Activated CD8-positive, alpha-beta memory T cell treated with anti-CD3 and anti-CD28 coated beads, Interleukin-2, amount 10 ng/mL, durations not matched to agents 7 days and 5 days (primary cell): ENCODE measurements at regions of chr10 and their contacts with region 1.

Region 1: GRCh38 chr10:103712570-103713498 is 142.5 kb downstream of the SH3PXD2A start:
- DNase-seq: peak; percentile 89
- ATAC-seq: peak; percentile 87
- H3K4me3 Mint-ChIP-seq: no peak overlapping the region
- H3K27ac Mint-ChIP-seq: no peak overlapping the region
- H3K4me1 Mint-ChIP-seq: peaks cover 5% of the 10 kb centered on the region
- H3K27me3 Mint-ChIP-seq: no peaks in the 10 kb centered on the region

Region 2: GRCh38 chr10:103685880-103686669 is 26.8 kb before region 1 on chr10:
- CTCF ChIA-PET with region 1: interaction called, 13 read pairs
- DNase-seq: peak; percentile 82
- ATAC-seq: peak; percentile 86
- H3K4me3 Mint-ChIP-seq: no peak overlapping the region
- H3K27ac Mint-ChIP-seq: no peak overlapping the region
- H3K4me1 Mint-ChIP-seq: peaks cover 2% of the 10 kb centered on the region
- H3K27me3 Mint-ChIP-seq: peaks cover 2% of the 10 kb centered on the region

Region 3: GRCh38 chr10:103772096-103772845 is 59.4 kb after region 1 on chr10:
- CTCF ChIA-PET with region 1: interaction called, 10 read pairs
- DNase-seq: peak; percentile 81
- ATAC-seq: peak; percentile 89
- H3K4me3 Mint-ChIP-seq: peak overlapping the region; percentile 77
- H3K27ac Mint-ChIP-seq: peak overlapping the region; percentile 90
- H3K4me1 Mint-ChIP-seq: peaks cover 28% of the 10 kb centered on the region
- H3K27me3 Mint-ChIP-seq: no peaks in the 10 kb centered on the region

Region 4: DNA sequence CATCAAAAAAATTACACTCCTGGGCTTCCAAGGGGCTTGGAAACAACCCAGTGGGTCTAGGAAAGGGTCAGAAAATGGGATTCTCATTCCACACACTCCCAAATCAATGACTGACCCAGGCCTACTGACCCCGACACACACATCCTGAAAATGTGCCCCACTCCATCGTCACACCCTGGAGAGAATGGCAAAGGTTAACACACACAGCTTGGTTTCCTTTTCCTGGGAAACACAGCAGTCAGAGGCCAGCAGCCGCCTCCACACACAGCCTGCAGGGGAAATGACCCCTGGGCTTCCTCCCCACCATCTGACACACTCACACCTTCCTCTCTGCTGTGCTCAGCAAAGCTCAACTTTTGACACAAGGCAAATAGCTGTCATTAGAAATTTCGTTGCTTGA is 99.6 kb after region 1 on chr10:
- CTCF ChIA-PET with region 1: interaction called, 11 read pairs
- DNase-seq: no peak
- ATAC-seq: no peak
- H3K4me3 Mint-ChIP-seq: no peak overlapping the region
- H3K27ac Mint-ChIP-seq: no peak overlapping the region
- H3K4me1 Mint-ChIP-seq: peaks cover 10% of the 10 kb centered on the region
- H3K27me3 Mint-ChIP-seq: no peaks in the 10 kb centered on the region

Region 5: DNA sequence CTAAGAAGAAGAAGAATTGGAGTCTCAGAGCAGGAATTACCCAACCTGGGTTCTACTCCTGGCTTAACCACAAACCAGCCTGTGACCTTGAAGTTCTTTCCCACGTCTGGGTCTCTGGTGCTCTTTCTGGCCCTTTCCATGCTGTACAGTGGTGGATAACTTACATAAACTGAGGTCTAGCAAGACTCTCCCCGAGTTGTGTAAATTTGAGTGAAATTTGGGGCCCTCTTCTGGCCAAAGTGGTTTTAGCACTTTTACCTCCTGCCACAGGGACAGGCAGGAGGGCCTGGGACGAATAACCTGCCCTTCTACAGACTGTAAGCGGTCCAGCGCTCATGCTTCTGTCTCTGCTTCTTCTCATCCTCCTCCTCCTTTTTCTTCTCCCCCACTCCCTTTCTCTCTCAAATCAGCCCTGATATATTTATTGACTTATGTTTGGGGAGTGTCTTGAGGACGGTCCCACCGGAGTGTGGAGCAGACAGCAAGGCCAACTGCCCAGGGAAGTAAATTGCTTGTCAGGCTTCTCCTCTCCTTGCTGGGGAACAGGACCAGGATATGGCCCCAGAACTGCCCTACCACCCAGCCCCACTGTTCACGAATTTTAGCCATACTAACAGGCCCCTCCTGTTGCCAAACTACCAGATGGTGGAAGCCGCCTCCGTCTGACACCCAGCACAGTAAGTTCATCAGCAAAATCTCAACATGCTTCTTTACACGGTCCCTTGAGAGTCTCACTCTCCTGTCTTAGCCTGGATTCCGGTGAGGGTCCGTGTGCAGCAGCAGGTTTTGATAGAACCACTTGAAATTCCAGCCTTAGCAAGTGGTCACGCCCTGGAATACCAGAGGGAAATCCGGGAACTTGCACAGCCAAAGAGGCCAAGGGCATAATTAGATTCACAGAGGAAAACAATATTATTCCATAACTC is 146.6 kb after region 1 on chr10:
- CTCF ChIA-PET with region 1: interaction called, 144 read pairs
- DNase-seq: peak; percentile 78
- ATAC-seq: peak; percentile 70
- H3K4me3 Mint-ChIP-seq: no peak overlapping the region
- H3K27ac Mint-ChIP-seq: no peak overlapping the region
- H3K4me1 Mint-ChIP-seq: peaks cover 6% of the 10 kb centered on the region
- H3K27me3 Mint-ChIP-seq: peaks cover 28% of the 10 kb centered on the region

Region 6: GRCh38 chr10:103888113-103888841 is 175.4 kb after region 1 on chr10:
- CTCF ChIA-PET with region 1: interaction called, 95 read pairs
- DNase-seq: no peak
- ATAC-seq: peak; percentile 80
- H3K4me3 Mint-ChIP-seq: no peak overlapping the region
- H3K27ac Mint-ChIP-seq: peak overlapping the region; percentile 20
- H3K4me1 Mint-ChIP-seq: peaks cover 36% of the 10 kb centered on the region
- H3K27me3 Mint-ChIP-seq: no peaks in the 10 kb centered on the region